OCI-LY7 (cell line): ENCODE measurements at regions of chr3 and their contacts with region 1.

Region 1: DNA sequence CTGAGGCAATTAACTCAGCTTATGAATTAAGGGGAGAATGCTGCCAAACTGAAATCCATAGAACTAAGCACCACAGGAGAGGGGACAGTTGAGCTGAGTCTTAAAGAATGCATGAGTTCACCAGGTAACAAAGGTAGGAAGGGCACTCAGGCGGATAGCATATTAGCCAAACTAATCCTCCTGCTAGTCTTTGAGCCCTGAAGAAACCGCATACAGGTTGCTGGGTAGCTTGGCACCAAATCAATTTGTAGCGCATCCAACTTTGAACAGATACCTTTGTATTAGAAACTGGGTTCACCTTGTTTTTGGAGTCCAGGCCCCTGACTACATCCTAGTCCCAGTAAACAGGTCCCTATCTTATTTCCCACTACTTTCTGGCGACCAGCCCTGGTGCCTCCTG is 93.7 kb downstream of the FRMD4B start:
- DNase-seq: no peak
- H3K4me3 ChIP-seq: no peak overlapping the region
- H3K27ac ChIP-seq: no peak overlapping the region
- H3K4me1 ChIP-seq: no peaks in the 10 kb centered on the region
- CTCF ChIP-seq: no peak

Region 2: GRCh38 chr3:67617518-67617917 is 1674.7 kb before region 1 on chr3:
- CTCF ChIA-PET with region 1: no interaction called
- POLR2A ChIA-PET with region 1: no interaction called
- intact Hi-C with region 1: no loop called
- DNase-seq: peak; percentile 65
- H3K4me3 ChIP-seq: no peak overlapping the region
- H3K27ac ChIP-seq: no peak overlapping the region
- H3K4me1 ChIP-seq: peaks cover 15% of the 10 kb centered on the region
- CTCF ChIP-seq: no peak

Region 3: GRCh38 chr3:69451594-69451993 is 159.4 kb after region 1 on chr3:
- CTCF ChIA-PET with region 1: no interaction called
- POLR2A ChIA-PET with region 1: interaction called, 10 read pairs
- intact Hi-C with region 1: no loop called
- DNase-seq: no peak
- H3K4me3 ChIP-seq: no peak overlapping the region
- H3K27ac ChIP-seq: no peak overlapping the region
- H3K4me1 ChIP-seq: no peaks in the 10 kb centered on the region
- CTCF ChIP-seq: peak; percentile 47